AG04450 (cell line): ENCODE measurements at regions of chr13 and their contacts with region 1.

Region 1: DNA sequence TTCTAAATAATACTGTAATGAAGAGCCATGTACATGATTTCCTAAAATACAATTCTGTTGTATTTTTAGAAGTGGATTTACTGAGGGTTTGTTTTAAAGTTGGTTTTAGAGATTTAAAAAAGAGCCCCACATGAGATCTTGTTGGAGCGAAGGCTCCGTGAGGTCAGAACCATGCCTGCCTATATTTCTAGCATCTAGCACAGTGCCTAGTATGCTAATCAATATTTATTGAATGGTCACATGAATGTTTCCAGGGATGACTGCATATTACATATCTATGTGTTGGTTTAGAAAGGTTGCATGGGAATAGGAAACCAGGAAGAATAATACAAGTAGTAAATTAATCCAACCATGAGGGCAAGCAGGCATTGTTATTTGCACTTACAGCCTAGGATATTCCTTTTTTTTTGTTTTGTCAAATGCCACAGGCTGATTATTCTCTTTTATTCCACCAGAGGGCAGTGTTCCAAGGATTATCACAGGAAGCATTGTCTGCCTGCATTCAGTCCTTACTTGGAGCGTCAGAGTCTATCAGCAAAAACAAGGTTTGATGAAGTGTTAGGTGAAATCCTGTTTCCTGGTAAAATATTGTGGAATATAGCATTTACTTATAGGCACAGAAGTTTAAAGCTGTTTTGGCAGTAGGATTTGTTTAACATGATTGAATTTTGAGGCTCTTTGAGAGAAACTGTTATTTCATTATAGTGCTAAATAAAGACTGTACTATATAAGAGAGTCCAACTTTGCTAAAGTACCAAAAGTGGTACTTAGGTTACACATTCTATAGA is 46.8 kb downstream of the COG3 start:
- DNase-seq: peak; percentile 50
- H3K4me3 ChIP-seq: no peak overlapping the region
- H3K27ac ChIP-seq: no peak overlapping the region
- H3K27me3 ChIP-seq: no peaks in the 10 kb centered on the region
- CTCF ChIP-seq: peak; percentile 81

Region 2: DNA sequence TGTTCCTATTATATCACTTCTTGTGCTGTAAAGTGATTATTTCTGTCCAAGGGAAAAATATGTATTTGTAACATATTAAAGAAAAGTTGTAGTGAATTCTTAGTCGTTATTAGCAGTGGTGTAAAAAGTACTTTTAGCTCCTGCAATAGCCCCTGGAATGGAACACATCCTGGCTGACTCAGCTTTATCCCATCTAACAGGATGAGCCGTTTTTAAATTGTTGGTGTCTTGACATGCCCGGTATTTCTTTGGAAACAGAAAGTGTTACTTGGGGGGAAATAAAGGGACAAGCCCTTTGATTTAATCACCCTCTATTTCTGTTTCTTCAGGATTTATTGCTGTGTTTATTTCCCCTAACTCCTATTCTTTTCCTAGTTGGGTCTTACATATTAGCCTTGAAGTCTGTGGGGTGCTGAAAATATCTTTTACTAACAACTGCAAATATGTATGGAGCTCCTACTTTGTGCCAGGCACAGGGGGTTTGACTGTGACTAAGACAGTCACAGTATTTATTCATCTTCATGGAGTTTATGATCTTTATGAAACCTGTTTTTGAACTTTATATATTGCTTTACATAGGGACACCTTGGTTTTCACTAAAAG is 28.8 kb before region 1 on chr13:
- CTCF ChIA-PET with region 1: interaction called, 10 read pairs
- POLR2A ChIA-PET with region 1: no interaction called
- DNase-seq: no peak
- H3K4me3 ChIP-seq: no peak overlapping the region
- H3K27ac ChIP-seq: no peak overlapping the region
- H3K27me3 ChIP-seq: no peaks in the 10 kb centered on the region
- CTCF ChIP-seq: no peak

Region 3: DNA sequence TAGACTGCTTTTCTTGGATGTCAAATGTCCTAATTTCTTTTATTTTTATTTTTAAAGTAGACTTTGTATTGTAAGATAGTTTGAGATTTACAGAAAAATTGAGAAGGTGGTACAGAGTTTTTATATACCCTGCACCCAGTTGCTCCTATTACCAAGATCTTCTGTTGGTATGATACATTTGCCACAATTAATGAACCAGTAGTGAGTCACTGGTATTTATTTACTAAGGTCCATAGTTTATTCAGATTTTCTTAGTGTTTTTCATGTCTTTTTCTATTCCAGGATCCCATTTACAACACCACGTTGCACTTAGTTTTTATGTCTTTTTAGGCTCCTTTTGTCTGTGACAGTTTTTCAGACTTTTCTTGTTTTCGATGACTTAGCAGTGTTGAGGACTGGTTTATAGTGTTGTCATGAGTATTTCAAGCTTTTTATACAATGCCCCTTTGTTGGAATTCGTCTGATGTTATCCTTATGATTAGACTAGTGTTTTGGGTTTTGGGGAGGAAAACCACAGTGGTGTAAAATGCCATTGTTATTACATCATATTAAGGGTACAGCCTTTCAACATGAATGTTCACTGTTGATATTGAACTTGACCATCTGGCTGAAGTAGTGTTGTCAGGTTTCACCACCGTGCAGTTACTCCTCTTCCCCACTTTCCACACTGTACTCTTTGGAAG is 10.9 kb before region 1 on chr13:
- CTCF ChIA-PET with region 1: interaction called, 25 read pairs
- POLR2A ChIA-PET with region 1: no interaction called
- DNase-seq: peak; percentile 83
- H3K4me3 ChIP-seq: no peak overlapping the region
- H3K27ac ChIP-seq: peak overlapping the region; percentile 67
- H3K27me3 ChIP-seq: no peaks in the 10 kb centered on the region
- CTCF ChIP-seq: no peak